Activated CD4-positive, alpha-beta memory T cell treated with anti-CD3 and anti-CD28 coated beads, Interleukin-2, amount 10 ng/mL, durations not matched to agents 7 days and 5 days (primary cell): ENCODE measurements at regions of chr4 and their contacts with region 1.

Region 1: GRCh38 chr4:1266881-1267763 is 18.2 kb upstream of the CTBP1 start:
- DNase-seq: no peak
- H3K4me3 Mint-ChIP-seq: peak overlapping the region; percentile 65
- H3K27ac Mint-ChIP-seq: peak overlapping the region; percentile 80
- H3K4me1 Mint-ChIP-seq: peaks cover 21% of the 10 kb centered on the region
- H3K27me3 Mint-ChIP-seq: no peaks in the 10 kb centered on the region

Region 2: GRCh38 chr4:1130316-1131186 is 136.6 kb before region 1 on chr4:
- CTCF ChIA-PET with region 1: interaction called, 54 read pairs
- POLR2A ChIA-PET with region 1: no interaction called
- DNase-seq: peak; percentile 81
- H3K4me3 Mint-ChIP-seq: no peak overlapping the region
- H3K27ac Mint-ChIP-seq: no peak overlapping the region
- H3K4me1 Mint-ChIP-seq: peaks cover 3% of the 10 kb centered on the region
- H3K27me3 Mint-ChIP-seq: peaks cover 19% of the 10 kb centered on the region

Region 3: DNA sequence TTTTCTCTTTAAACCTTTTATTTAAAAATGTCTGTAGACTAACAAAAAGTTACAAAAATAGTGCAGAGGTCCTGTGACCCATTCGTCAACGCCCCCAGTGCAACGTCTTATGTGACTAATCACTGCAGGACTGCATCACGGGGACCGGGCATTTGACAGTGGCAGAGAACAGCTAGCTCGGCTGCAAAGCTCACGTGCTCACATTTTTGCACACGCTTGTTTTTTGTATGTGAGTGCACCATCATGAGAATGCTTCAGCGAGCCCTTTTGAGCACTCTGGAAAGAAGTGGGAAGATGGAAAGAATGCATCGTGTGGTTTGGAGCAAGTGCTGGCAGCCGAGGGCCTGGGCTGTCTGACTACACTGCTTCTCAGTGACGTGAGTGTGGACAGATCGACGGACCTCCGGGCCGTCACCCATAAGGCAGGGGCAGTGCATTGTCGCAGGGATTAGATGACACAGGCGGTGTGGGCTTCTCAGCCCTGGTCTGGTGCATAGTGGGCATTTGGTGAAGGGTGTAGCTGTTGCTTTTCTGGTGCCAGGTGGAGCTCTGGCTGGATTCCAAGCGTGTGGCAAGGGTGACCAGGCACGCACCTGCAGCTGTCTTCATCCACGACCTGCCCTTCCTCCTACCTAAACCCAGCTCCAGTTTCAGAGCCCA is 112.5 kb before region 1 on chr4:
- CTCF ChIA-PET with region 1: interaction called, 10 read pairs
- POLR2A ChIA-PET with region 1: no interaction called
- DNase-seq: no peak
- H3K4me3 Mint-ChIP-seq: no peak overlapping the region
- H3K27ac Mint-ChIP-seq: no peak overlapping the region
- H3K4me1 Mint-ChIP-seq: no peaks in the 10 kb centered on the region
- H3K27me3 Mint-ChIP-seq: peaks cover 49% of the 10 kb centered on the region

Region 4: GRCh38 chr4:1200425-1201035 is 66.6 kb before region 1 on chr4:
- CTCF ChIA-PET with region 1: interaction called, 4 read pairs
- POLR2A ChIA-PET with region 1: interaction called, 13 read pairs
- DNase-seq: peak; percentile 20
- H3K4me3 Mint-ChIP-seq: peak overlapping the region; percentile 79
- H3K27ac Mint-ChIP-seq: peak overlapping the region; percentile 99
- H3K4me1 Mint-ChIP-seq: peaks cover 60% of the 10 kb centered on the region
- H3K27me3 Mint-ChIP-seq: no peaks in the 10 kb centered on the region

Region 5: GRCh38 chr4:1289207-1290164 is 22.4 kb after region 1 on chr4 and contains the start of gene MAEA:
- CTCF ChIA-PET with region 1: interaction called, 18 read pairs
- POLR2A ChIA-PET with region 1: interaction called, 25 read pairs
- DNase-seq: peak; percentile 98
- H3K4me3 Mint-ChIP-seq: peak within 1 kb of the TSS; percentile 94
- H3K27ac Mint-ChIP-seq: peak within 1 kb of the TSS; percentile 90
- H3K4me1 Mint-ChIP-seq: peaks cover 39% of the 10 kb centered on the region
- H3K27me3 Mint-ChIP-seq: no peaks in the 10 kb centered on the region
- total RNA-seq, gene MAEA: 61.6 to 64.1 TPM

Region 6: DNA sequence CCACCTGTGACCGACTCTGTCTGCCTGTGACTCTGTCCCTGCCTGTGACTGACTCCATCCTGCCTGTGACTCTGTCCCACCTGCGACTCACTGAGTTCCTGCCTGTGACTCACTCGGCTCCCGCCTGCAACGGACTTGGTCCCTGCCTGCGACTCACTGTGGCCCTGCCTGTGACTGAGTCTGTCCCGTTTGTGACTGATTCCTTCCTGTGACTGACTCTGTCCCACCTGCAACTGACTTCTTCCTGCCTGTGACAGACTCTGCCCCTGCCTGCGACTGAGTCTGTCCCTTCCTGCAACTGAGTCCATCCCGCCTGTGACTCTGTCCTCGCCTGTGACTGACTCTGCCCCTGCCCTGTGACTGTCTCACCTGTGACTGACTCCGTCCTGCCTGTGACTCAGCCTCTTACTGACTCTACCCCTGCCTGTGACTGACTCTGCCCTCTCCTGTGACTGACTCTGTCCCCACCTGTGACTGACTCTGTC is 70.3 kb after region 1 on chr4:
- CTCF ChIA-PET with region 1: no interaction called
- POLR2A ChIA-PET with region 1: no interaction called
- DNase-seq: peak; percentile 63
- H3K4me3 Mint-ChIP-seq: peak overlapping the region; percentile 2
- H3K27ac Mint-ChIP-seq: peak overlapping the region; percentile 85
- H3K4me1 Mint-ChIP-seq: peaks cover 31% of the 10 kb centered on the region
- H3K27me3 Mint-ChIP-seq: no peaks in the 10 kb centered on the region